ENCODE measurements at regions of chr17 and their contacts with region 1.

Region 1: GRCh38 chr17:41615454-41615853 is 2.9 kb upstream of the KRT16 start:
- DNase-seq: peak; percentile 95
- H3K4me3 ChIP-seq: no peak overlapping the region
- H3K27ac ChIP-seq: no peak overlapping the region
- H3K4me1 ChIP-seq: peaks cover 41% of the 10 kb centered on the region
- H3K27me3 ChIP-seq: no peaks in the 10 kb centered on the region
- CTCF ChIP-seq: peak; percentile 15 to 31

Region 2: GRCh38 chr17:41223821-41224220 is 391.6 kb before region 1 on chr17:
- CTCF ChIA-PET with region 1: no interaction called
- dilution Hi-C with region 1: no loop called
- in situ Hi-C with region 1: no loop called
- intact Hi-C with region 1: no loop called
- DNase-seq: no peak
- H3K4me3 ChIP-seq: no peak overlapping the region
- H3K27ac ChIP-seq: no peak overlapping the region
- H3K4me1 ChIP-seq: no peaks in the 10 kb centered on the region
- H3K27me3 ChIP-seq: no peaks in the 10 kb centered on the region
- CTCF ChIP-seq: no peak

Region 3: DNA sequence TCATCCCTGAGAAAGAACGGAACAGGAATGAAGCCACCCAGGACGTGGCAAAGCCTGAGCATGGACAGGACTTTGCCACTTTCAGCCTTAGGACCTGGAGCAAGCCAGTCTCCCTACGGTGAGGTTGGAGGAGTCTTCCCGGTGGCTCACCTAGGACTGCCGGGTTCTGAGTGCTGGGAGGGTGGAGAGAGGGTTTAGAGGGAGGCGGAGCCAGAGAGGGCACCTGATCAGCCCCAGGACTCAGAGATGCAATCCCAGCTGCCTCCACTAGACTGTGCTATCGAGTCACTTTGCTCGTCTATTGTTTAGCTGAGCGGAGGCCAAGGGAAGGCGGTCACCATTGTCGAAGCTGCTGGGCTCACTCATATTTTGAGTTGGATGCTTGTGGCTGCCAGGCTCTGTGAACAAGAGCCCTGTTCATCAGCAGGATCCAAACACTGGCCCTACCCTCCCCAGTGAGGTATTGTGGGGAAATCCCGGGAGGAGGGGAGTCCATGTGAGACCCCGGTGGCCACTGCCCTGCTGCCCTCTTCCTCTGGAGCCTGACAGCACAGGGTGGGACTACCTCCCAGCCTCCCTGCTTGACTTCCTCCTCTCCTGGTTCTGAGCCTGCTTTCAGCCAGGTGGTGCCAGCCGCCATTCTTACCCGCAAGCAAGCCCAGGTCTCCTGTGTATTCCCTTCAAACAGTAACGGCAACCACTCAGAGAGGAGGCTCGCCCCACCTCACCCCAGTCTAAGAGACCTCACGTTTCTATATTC is 35.8 kb before region 1 on chr17:
- CTCF ChIA-PET with region 1: interaction called, 4 read pairs
- dilution Hi-C with region 1: no loop called
- in situ Hi-C with region 1: loop called in 1 of 2 experiments (anchors 5 kb)
- intact Hi-C with region 1: loop called (anchors 1 kb)
- DNase-seq: peak; percentile 98
- H3K4me3 ChIP-seq: no peak overlapping the region
- H3K27ac ChIP-seq: peak overlapping the region; percentile 97
- H3K4me1 ChIP-seq: peaks cover 63% of the 10 kb centered on the region
- H3K27me3 ChIP-seq: no peaks in the 10 kb centered on the region
- CTCF ChIP-seq: peak; percentile 93 to 96